ENCODE measurements at regions of chr11 and their contacts with region 1.

Region 1: DNA sequence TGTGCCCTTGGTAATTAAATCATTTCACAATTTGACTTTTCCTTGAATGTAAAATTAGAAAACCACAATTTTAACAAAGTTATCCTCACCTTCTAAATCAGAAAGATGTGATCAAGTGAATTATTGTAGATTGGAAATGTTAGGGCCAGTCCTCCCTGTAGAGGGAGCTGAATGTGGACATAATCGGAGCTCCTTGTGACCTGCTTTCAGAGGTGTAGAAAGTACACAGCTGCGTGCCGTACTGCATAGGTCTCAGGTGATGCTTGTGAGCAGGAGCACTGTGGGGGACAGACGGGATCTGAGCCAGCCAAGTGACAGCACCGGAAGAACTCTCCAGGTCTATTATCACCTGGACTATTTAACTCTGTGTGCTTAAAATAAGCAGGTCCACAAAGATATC is 338.0 kb downstream of the AASDHPPT start:
- DNase-seq: peak; percentile 4
- ATAC-seq: peak; percentile 57; the same call in 1 of the 3 replicates
- H3K4me3 ChIP-seq: no peak overlapping the region
- H3K27ac ChIP-seq: no peak overlapping the region
- H3K4me1 ChIP-seq: no peaks in the 10 kb centered on the region
- H3K27me3 ChIP-seq: no peaks in the 10 kb centered on the region; a peak in 1 of 5 replicates
- CTCF ChIP-seq: no peak
- EP300 ChIP-seq: no peak
- POLR2A ChIP-seq: no peak
- RAD21 ChIP-seq: no peak

Region 2: GRCh38 chr11:106369224-106369623 is 46.3 kb before region 1 on chr11:
- CTCF ChIA-PET with region 1: no interaction called
- POLR2A ChIA-PET with region 1: no interaction called
- in situ Hi-C with region 1: no loop called
- intact Hi-C with region 1: no loop called
- DNase-seq: no peak
- ATAC-seq: no peak
- H3K4me3 ChIP-seq: no peak overlapping the region
- H3K27ac ChIP-seq: no peak overlapping the region
- H3K4me1 ChIP-seq: no peaks in the 10 kb centered on the region
- H3K27me3 ChIP-seq: no peaks in the 10 kb centered on the region
- CTCF ChIP-seq: no peak
- EP300 ChIP-seq: no peak
- POLR2A ChIP-seq: no peak
- RAD21 ChIP-seq: no peak

Region 3: GRCh38 chr11:106552694-106553203 is 137.2 kb after region 1 on chr11:
- CTCF ChIA-PET with region 1: no interaction called
- POLR2A ChIA-PET with region 1: no interaction called
- in situ Hi-C with region 1: no loop called
- intact Hi-C with region 1: loop called (anchors 1 kb)
- DNase-seq: peak; percentile 2
- ATAC-seq: peak; percentile 81
- H3K4me3 ChIP-seq: no peak overlapping the region
- H3K27ac ChIP-seq: no peak overlapping the region
- H3K4me1 ChIP-seq: 0 out of 2 replicates have a peak, but pooled peaks cover 7% of the 10 kb centered on the region
- H3K27me3 ChIP-seq: no peaks in the 10 kb centered on the region
- CTCF ChIP-seq: peak; percentile 40
- EP300 ChIP-seq: no peak
- POLR2A ChIP-seq: no peak
- RAD21 ChIP-seq: no peak

Measured in HepG2 (cell line).